ENCODE measurements at regions of chr9 and their contacts with region 1.

Region 1: DNA sequence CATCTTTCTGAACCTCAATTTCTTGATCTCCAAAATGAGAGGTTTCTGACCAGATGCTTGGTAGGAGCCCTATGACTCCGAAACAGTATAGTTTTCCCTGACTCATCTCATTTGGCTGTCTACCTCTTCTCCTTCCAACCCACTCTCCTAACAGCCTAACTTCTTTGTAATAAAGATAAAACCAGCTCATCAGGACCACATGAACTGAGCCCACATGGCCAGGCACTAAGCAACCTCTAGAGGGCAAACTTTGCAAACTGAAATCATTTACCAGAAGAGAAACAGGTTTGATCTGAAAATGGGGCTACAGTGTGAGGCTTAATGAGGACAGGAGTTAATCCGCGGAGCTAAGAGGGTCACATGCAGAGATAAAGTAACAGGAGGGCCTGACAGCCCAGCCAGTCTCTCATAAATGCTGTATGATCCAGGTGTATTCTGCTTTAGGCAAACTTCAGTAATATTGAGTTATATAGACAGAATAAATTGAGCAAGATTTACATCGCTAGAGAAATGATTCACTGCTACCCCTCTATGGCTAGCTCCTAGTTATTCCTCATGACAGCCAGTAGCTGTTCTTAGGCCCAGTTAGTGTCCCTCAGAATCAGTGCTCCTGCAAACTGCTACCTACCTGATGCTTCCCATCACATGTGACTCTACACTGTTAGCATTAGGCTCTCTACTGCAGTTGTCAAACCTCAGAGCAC is 64.6 kb downstream of the ABCA1 start:
- DNase-seq: peak; percentile 74
- H3K4me3 ChIP-seq: no peak overlapping the region
- CTCF ChIP-seq: peak; percentile 94

Region 2: DNA sequence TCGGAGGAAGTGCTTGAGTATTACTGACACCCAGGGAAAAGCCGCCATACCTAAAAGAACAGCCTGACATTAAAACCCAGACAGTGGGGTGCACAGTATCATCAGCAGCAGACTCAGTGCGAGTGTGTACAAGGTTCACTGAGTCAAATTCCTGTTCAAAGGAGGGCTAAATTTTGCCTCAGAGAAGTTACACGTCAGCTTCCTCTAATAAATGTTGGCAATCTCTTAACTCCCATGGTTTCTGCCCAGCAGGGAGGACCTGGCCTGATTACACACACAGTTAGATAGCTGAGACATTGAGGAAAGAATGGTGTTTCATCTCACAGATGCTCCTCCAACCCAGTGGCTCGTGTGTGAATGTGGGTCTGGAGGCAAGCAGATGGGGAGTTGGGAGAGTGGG is 61.2 kb before region 1 on chr9:
- in situ Hi-C with region 1: no loop called
- DNase-seq: peak; percentile 86
- H3K4me3 ChIP-seq: no peak overlapping the region
- CTCF ChIP-seq: no peak

Region 3: GRCh38 chr9:104934691-104935500 is 71.6 kb after region 1 on chr9:
- in situ Hi-C with region 1: loop called (anchors 5 kb)
- DNase-seq: no peak
- H3K4me3 ChIP-seq: no peak overlapping the region
- CTCF ChIP-seq: no peak

Region 4: DNA sequence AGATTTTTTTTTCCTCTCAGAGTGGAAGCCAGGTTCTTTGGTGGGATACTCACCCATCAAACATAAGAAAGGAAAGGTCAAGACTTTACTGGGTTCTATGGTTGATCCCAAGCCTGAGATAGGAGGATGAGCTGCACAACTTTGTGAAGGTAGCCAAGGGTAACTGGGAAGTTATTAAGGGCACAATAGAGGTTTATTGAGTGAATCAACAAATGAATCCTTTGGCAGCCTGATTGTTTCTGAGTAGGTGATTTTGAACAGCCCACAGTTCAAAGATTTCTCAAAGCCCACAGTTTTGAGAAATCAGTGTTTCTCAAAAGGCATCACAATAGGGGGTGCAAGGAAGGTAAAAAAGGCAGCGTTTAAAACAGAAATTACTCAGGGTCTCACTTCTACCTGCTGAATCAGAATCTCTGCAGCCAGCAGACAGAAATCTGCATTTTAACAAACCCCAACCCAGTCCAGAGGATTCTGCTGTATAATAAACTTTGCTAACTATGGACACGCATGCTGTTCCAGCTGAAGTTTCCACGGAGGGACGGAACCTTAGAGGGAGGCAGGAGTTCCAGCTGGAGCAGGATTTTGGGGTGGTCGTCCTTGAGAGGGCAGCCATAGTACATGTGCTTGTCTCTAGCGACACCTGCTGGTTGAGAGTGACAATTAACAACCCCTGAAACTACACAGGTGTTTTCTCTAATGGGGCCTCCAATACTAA is 551.8 kb after region 1 on chr9:
- in situ Hi-C with region 1: loop called (anchors 25 kb)
- DNase-seq: peak; percentile 37
- H3K4me3 ChIP-seq: no peak overlapping the region
- CTCF ChIP-seq: peak; percentile 76